ENCODE measurements at regions of chr11 and their contacts with region 1.

Region 1: DNA sequence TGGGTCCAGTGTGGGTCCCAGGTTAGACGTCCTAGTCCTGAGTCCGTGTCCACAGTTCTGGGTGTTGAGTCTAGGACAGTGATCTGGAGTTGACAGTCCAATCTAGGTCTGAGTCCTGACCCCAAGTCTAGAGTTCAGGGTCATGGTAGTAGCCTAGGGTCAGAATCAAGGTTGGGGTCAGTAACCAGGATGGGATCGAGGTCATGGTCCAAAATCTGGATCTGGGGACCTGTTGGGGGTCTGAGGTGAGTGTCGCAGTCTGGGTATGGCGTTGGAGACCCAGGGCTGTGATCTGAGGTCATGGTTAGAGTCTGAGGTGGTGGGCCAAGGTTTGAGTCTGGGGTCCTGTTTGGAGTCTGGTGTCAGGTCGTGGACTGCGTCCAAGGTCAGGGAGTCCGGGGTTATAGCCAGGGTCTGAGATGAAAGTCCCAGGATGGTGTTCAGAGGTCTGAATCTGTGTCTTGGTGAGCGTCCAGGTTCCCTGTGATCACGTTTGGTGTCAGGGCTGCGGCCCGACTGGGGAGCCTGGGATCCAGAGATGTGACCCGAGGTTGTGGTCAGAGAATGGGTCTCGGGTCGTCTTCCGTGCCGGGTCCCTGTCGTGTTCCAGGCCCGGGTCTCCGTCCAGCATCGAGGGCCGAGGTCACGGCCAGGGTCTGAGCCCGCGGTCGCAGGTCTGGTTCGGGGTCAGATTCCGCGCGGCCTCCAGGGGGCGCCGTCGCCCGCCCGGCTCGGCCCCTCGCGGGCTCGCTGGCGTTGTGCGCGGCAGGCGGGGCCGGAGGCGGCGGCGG is 445 bp upstream of the GRK2 start:
- DNase-seq: peak; percentile 50 to 91 (median 78)
- ATAC-seq: peak; percentile 76
- H3K4me3 ChIP-seq: peak overlapping the region; percentile 25
- H3K4me3 Mint-ChIP-seq: peak overlapping the region; percentile 75 to 99 (median 84)
- H3K27ac ChIP-seq: peak overlapping the region; percentile 65
- H3K27ac Mint-ChIP-seq: peak overlapping the region; percentile 72 to 94 (median 81)
- H3K4me1 ChIP-seq: peaks cover 42 to 56% of the 10 kb centered on the region in 2 donors
- H3K4me1 Mint-ChIP-seq: peaks cover 22 to 77% (median 65%) of the 10 kb centered on the region in 7 donors
- H3K27me3 ChIP-seq: no peaks in the 10 kb centered on the region
- H3K27me3 Mint-ChIP-seq: no peaks in the 10 kb centered on the region

Region 2: DNA sequence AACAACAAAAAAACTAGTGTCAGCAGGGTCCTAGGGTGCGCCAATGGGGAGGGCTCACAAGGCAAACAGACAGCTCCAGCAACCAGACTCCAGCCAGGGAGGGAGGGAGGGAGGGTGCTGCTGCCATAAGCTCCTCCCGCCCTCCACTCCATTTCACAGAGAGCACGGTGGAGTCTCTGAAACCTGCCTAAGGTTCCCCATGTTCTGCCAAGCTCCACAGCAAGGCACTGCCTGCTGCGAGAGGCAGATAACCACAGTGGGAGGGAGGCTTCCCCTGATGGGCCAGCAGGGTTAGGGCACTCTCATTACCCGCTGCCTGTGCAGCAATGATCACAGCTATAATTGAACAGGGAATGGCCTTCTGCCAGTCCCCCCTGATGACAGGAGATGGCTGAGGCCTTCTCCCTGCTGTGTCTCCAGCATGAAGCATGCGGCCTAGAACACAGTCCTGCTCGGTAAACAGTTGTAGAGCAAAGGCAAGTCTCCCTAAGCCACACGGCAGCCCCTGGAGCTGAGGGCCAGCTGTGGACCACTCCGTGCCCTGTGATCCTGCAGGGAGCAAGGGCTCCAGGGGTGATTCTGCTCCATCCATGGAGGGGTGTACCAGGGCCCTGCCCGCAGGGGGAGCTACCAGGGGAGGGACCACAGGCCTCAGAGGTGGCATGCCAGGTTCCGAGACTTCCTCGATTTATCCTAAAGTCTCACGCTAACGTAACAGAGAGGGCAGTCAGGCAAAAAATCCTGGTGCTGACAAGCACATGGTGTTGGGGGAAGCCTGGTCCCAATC is 350.6 kb before region 1 on chr11:
- CTCF ChIA-PET with region 1: no interaction called
- POLR2A ChIA-PET with region 1: no interaction called
- intact Hi-C with region 1: no loop called
- DNase-seq: no peak
- ATAC-seq: no peak
- H3K4me3 ChIP-seq: no peak overlapping the region
- H3K4me3 Mint-ChIP-seq: no peak overlapping the region
- H3K27ac ChIP-seq: no peak overlapping the region
- H3K27ac Mint-ChIP-seq: no peak overlapping the region
- H3K4me1 ChIP-seq: no peaks in the 10 kb centered on the region
- H3K4me1 Mint-ChIP-seq: peaks cover 0 to 6% (median 0%) of the 10 kb centered on the region in 7 donors
- H3K27me3 ChIP-seq: no peaks in the 10 kb centered on the region
- H3K27me3 Mint-ChIP-seq: no peaks in the 10 kb centered on the region

Region 3: GRCh38 chr11:67252831-67253239 is 13.0 kb before region 1 on chr11:
- CTCF ChIA-PET with region 1: interaction called, 19 read pairs
- POLR2A ChIA-PET with region 1: interaction called, 4 read pairs
- intact Hi-C with region 1: loop called in 1 of 2 experiments (anchors 1 kb)
- DNase-seq: peak in 6 of 9 donors; percentile 40 to 50 (median 46)
- ATAC-seq: peak; percentile 82
- H3K4me3 ChIP-seq: no peak overlapping the region
- H3K4me3 Mint-ChIP-seq: peak overlapping the region in 2 of 10 donors; percentile 35 to 47
- H3K27ac ChIP-seq: peak overlapping the region; percentile 33
- H3K27ac Mint-ChIP-seq: peak overlapping the region in 8 of 9 donors; percentile 25 to 71 (median 49)
- H3K4me1 ChIP-seq: peaks cover 4 to 21% of the 10 kb centered on the region in 2 donors
- H3K4me1 Mint-ChIP-seq: peaks cover 20 to 59% (median 40%) of the 10 kb centered on the region in 7 donors
- H3K27me3 ChIP-seq: no peaks in the 10 kb centered on the region
- H3K27me3 Mint-ChIP-seq: no peaks in the 10 kb centered on the region

Region 4: GRCh38 chr11:67288452-67289225 is 22.8 kb after region 1 on chr11:
- CTCF ChIA-PET with region 1: interaction called, 24 read pairs
- POLR2A ChIA-PET with region 1: interaction called, 729 read pairs
- intact Hi-C with region 1: loop called (anchors 1 kb)
- DNase-seq: peak; percentile 84 to 94 (median 91)
- ATAC-seq: peak; percentile 82
- H3K4me3 ChIP-seq: peak overlapping the region; percentile 95
- H3K4me3 Mint-ChIP-seq: peak overlapping the region; percentile 76 to 98 (median 85)
- H3K27ac ChIP-seq: peak overlapping the region; percentile 81
- H3K27ac Mint-ChIP-seq: peak overlapping the region; percentile 95 to 99 (median 97)
- H3K4me1 ChIP-seq: peaks cover 54 to 60% of the 10 kb centered on the region in 2 donors
- H3K4me1 Mint-ChIP-seq: peaks cover 29 to 73% (median 57%) of the 10 kb centered on the region in 7 donors
- H3K27me3 ChIP-seq: no peaks in the 10 kb centered on the region
- H3K27me3 Mint-ChIP-seq: peaks cover 0 to 2% (median 0%) of the 10 kb centered on the region in 5 donors

Region 5: DNA sequence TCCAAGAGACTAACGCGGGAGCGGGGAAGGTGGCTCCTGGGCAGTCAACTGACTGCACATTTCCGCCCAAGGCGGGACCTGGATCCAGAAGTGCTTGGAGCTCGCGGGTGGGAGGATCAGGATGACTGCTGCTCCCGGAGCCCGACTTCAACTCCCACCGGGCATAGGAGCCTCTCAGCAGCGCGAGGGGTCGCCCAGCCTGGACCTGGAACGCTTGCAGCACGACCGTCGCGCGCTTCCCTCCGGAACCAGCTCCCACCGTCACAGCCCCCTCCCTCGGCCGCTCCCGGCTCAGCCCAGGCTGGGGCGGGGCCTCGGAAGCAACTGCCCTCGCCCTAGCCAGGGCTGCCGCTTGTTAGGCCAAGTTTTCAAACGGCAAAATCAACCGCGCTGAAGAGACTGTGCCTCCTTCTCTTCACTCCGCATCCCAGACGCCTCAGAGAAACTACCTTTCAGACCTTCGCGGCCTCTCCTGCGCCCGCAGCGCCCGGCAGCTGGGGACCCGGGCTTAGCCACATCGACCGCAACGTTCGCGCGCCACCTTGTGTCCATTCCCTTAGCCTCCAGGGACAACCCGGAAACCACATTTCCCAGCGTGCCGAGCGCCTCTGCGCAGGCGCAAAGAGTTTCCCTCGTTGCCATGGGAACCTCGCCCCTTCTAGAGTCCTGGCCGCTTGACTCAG is 51.5 kb after region 1 on chr11:
- CTCF ChIA-PET with region 1: interaction called, 85 read pairs
- POLR2A ChIA-PET with region 1: interaction called, 55 read pairs
- intact Hi-C with region 1: loop called (anchors 1 kb)
- DNase-seq: peak; percentile 95 to 98 (median 97)
- ATAC-seq: peak; percentile 93
- H3K4me3 ChIP-seq: peak overlapping the region; percentile 64
- H3K4me3 Mint-ChIP-seq: peak overlapping the region; percentile 89 to 99 (median 98)
- H3K27ac ChIP-seq: peak overlapping the region; percentile 73
- H3K27ac Mint-ChIP-seq: peak overlapping the region; percentile 88 to 99 (median 95)
- H3K4me1 ChIP-seq: peaks cover 15 to 23% of the 10 kb centered on the region in 2 donors
- H3K4me1 Mint-ChIP-seq: peaks cover 25 to 48% (median 39%) of the 10 kb centered on the region in 7 donors
- H3K27me3 ChIP-seq: no peaks in the 10 kb centered on the region
- H3K27me3 Mint-ChIP-seq: peaks cover 0 to 13% (median 0%) of the 10 kb centered on the region in 5 donors

Region 6: GRCh38 chr11:67345920-67346799 is 80.3 kb after region 1 on chr11:
- CTCF ChIA-PET with region 1: interaction called, 9 read pairs
- POLR2A ChIA-PET with region 1: interaction called, 25 read pairs
- intact Hi-C with region 1: loop called in 1 of 2 experiments (anchors 1 kb)
- DNase-seq: peak in 5 of 9 donors; percentile 34 to 62 (median 52)
- ATAC-seq: peak; percentile 76
- H3K4me3 ChIP-seq: no peak overlapping the region
- H3K4me3 Mint-ChIP-seq: peak overlapping the region; percentile 30 to 74 (median 56)
- H3K27ac ChIP-seq: peak overlapping the region; percentile 68
- H3K27ac Mint-ChIP-seq: peak overlapping the region; percentile 61 to 98 (median 92)
- H3K4me1 ChIP-seq: peaks cover 5 to 38% of the 10 kb centered on the region in 2 donors
- H3K4me1 Mint-ChIP-seq: peaks cover 27 to 70% (median 60%) of the 10 kb centered on the region in 7 donors
- H3K27me3 ChIP-seq: no peaks in the 10 kb centered on the region
- H3K27me3 Mint-ChIP-seq: no peaks in the 10 kb centered on the region